ENCODE measurements at regions of chr6 and their contacts with region 1.

Region 1: GRCh38 chr6:142692942-142693341 is 252.0 kb downstream of the HIVEP2 start:
- DNase-seq: peak in 1 of 2 donors; percentile 62
- ATAC-seq: peak; percentile 66

Region 2: DNA sequence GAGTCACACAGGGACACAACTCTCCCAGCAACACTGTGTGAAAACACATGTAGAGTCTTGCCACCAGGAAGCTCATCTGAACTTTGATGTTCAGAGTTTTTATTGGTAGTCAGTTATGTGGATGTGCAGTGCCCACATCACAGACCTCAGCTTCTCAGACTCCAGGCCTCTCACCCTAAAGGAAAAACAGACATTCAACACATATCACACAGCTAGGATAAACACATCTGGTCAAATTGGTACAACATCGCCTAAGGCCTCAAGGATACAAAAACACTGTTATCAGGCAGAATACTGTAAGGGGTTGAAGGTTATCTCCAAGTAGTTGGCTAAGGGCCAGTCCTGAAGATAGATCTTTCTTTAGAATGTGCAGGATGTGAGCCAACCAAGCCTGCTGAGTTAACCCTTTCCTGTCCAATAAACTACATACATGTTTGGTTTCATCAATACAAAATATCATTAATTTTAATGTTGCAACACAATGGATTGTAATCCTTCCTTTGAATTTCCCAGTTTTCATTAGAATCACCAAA is 868.6 kb before region 1 on chr6:
- intact Hi-C with region 1: no loop called
- DNase-seq: no peak
- ATAC-seq: no peak

Region 3: DNA sequence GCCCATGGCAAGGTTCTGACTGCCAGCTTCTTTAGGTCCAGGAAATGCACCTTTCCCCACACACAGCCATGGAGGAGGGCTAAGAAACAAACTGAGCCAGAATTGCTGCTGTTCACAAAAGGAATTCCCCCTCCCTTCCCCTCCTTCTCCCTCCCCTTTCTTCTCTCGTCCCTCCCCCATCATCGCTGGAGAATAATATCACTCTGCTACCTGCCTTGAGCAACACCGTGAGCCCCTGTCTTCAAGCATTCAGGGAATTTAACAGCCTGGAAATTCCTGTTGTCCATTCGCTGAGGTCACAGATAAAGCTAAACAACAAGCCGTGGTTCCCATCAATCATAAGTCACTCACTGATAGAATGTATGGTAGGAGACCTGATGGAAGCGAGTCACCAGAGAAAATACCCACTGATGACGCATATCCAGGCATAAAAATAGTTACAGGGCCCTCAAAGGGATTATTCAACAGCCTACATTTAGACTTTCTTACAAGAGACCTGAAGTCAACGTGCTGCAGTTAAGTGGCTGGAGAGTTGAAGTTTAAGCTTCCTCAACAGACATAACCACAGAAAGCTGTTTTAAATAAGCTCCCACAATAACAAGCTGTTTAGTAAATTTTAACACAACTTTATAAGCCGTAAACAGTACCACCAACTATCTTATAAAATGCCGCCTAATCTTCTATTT is 192.4 kb after region 1 on chr6:
- intact Hi-C with region 1: loop called in 1 of 2 experiments (anchors 10 kb)
- DNase-seq: peak in 1 of 2 donors; percentile 9
- ATAC-seq: peak; percentile 70

Region 4: GRCh38 chr6:142952614-142953013 is 259.7 kb after region 1 on chr6:
- intact Hi-C with region 1: loop called in 1 of 2 experiments (anchors 10 kb)
- DNase-seq: no peak
- ATAC-seq: no peak

Region 5: GRCh38 chr6:143026696-143027449 is 333.9 kb after region 1 on chr6:
- intact Hi-C with region 1: loop called in 1 of 2 experiments (anchors 2 kb)
- DNase-seq: peak; percentile 27 to 48
- ATAC-seq: peak; percentile 52

Region 6: GRCh38 chr6:143427109-143427817 is 734.3 kb after region 1 on chr6:
- intact Hi-C with region 1: loop called in 1 of 2 experiments (anchors 2 kb)
- DNase-seq: peak; percentile 32 to 69
- ATAC-seq: peak; percentile 94